ENCODE measurements at regions of chr11 and their contacts with region 1.

Region 1: DNA sequence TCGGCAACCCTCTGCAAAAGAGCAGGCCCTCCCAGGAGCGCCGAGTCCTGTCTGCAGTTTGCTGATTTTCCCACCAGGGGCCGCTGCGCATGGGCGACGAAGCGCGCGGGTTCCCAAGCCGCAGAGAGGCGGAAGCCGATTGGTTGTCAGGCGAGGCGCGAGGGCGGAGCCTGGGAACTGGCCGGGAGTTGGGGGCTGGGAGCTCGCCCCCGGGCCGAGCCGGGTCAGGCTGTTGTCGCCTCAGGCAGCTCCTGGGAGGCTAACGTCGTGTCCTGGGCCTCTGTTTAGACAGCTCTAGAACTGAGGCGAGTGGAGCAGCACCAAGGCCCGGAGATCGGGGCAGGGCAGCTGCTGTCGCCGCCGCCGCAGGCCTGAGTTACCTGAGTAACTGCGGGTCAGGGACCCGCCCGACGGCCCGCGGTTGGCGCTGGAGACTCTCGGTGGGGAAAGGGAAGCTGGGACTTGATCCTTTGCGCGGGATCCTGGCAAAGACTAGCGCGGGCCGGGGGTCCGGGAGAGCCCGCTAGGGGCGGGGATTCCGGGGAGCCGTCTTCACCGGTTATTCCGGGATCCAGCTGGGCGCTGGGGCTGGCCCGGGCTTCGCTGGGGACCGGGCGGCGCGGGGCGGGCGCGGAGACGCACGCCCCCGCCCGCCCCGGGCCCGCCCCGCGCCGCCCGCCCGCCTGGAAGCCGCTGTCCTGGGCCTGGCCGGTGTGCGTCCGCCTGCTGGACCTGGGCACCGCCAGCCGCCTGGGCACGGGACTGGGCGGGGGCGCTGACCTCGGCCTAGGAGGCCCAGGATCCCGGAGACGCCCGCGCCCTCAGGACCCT is at the start of gene STIM1:
- DNase-seq: peak; percentile 75 to 100
- H3K4me3 ChIP-seq: peak within 1 kb of the TSS; percentile 47 to 84 (median 72)
- H3K27ac ChIP-seq: no peak within 1 kb of the TSS
- H3K4me1 ChIP-seq: peaks cover 10 to 17% (median 11%) of the 10 kb centered on the region in 4 experiments
- H3K27me3 ChIP-seq: peaks cover 0 to 13% (median 8%) of the 10 kb centered on the region in 4 experiments; a peak in 5 of 7 replicates
- CTCF ChIP-seq: peak; percentile 84 to 90 (median 90)
- EP300 ChIP-seq: peak in 1 of 2 experiments; percentile 67; a peak in 1 of 3 replicates
- POLR2A ChIP-seq: peak in 1 of 2 experiments; percentile 52; a peak in 1 of 3 replicates
- RAD21 ChIP-seq: peak; percentile 74 to 85
- total RNA-seq, gene STIM1: 11.6 and 12.2 TPM in 2 replicates

Region 2: GRCh38 chr11:3807909-3808860 is 47.0 kb before region 1 on chr11 and contains the start of gene PGAP2:
- CTCF ChIA-PET with region 1: interaction called, 14 read pairs
- POLR2A ChIA-PET with region 1: no interaction called
- DNase-seq: peak; percentile 54 to 90
- H3K4me3 ChIP-seq: peak within 1 kb of the TSS; percentile 66 to 84 (median 74)
- H3K27ac ChIP-seq: peak within 1 kb of the TSS; percentile 46; the same call in 1 of the 2 replicates
- H3K4me1 ChIP-seq: peaks cover 0 to 8% (median 5%) of the 10 kb centered on the region in 4 experiments; a peak in 5 of 7 replicates
- H3K27me3 ChIP-seq: no peaks in the 10 kb centered on the region
- CTCF ChIP-seq: peak; percentile 75 to 89 (median 86)
- EP300 ChIP-seq: no peak
- POLR2A ChIP-seq: peak in 1 of 2 experiments; percentile 61; a peak in 2 of 3 replicates
- RAD21 ChIP-seq: peak; percentile 73 to 76
- total RNA-seq, gene PGAP2: 56.0 and 56.5 TPM in 2 replicates

Region 3: DNA sequence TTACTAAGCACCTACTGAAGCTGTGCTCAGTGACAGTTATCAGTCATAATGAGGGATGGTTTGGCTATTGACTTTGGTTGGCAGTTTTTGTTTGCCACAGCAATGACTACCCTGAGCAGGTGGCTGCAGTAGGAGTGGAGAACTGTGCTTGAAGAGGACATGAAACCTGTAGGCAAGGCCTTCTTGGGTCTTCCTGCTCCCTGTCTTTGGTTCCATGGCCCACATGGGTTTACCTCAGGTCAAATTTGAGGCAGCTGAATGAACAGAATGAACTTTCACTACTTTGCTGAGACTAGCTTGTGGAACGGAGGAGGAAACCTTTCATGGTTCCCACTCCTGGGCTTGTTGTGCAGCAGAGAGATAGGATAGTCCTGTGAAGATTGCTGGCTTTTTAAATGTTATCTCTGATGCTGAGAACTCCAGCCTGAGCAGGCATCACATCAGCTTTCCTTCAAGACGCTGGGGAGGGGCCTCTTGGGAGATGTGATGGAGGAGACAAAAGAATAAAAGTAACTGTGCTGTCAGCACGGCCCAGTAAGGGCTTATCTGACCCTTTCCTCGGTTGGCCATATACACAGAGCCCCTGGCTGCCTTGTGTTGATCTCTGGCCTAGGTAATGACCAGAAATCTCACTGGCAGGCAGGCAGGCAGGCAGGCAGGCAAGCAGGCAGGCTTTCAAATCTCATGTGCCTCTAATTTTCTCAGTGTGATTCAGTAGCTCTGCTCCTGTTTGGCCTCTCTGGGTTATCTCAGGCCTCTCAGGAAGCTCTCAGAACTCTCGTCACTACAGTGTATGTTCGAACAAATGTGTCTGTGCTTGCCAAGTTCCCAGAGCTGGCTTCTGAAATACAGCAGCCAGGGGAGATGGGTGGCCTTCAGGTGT is 12.3 kb after region 1 on chr11:
- CTCF ChIA-PET with region 1: interaction called, 73 read pairs
- POLR2A ChIA-PET with region 1: interaction called, 6 read pairs
- DNase-seq: no peak
- H3K4me3 ChIP-seq: no peak overlapping the region
- H3K27ac ChIP-seq: no peak overlapping the region
- H3K4me1 ChIP-seq: peaks cover 0 to 1% (median under 1%) of the 10 kb centered on the region in 4 experiments; a peak in 2 of 7 replicates
- H3K27me3 ChIP-seq: no peaks in the 10 kb centered on the region
- CTCF ChIP-seq: no peak
- EP300 ChIP-seq: no peak
- POLR2A ChIP-seq: no peak
- RAD21 ChIP-seq: no peak

Region 4: DNA sequence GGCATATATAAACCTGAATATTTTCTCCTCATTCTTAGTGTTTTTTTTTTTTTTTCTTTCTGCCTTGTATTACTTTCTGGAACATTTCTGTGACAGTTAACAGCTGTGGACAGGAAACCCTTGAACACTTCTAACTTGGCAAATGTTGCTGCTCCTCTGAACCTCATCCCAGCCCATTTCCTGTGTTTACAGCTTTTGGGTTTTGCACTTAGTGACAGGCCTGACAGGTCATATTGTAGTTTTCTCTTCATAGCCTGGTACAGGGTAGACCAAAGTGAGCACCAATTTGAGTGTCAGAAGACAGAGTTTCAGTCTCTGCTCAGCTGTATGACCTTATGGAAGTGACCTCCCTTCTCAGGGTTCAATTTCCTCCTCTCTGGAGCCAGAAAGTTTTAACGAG is 91.9 kb after region 1 on chr11:
- CTCF ChIA-PET with region 1: interaction called, 14 read pairs
- POLR2A ChIA-PET with region 1: no interaction called
- DNase-seq: no peak
- H3K4me3 ChIP-seq: no peak overlapping the region
- H3K27ac ChIP-seq: no peak overlapping the region
- H3K4me1 ChIP-seq: peaks cover 0 to 3% (median 2%) of the 10 kb centered on the region in 4 experiments; a peak in 4 of 7 replicates
- H3K27me3 ChIP-seq: no peaks in the 10 kb centered on the region; a peak in 1 of 7 replicates
- CTCF ChIP-seq: no peak
- EP300 ChIP-seq: no peak
- POLR2A ChIP-seq: no peak
- RAD21 ChIP-seq: no peak

Region 5: GRCh38 chr11:3971756-3972404 is 116.7 kb after region 1 on chr11:
- CTCF ChIA-PET with region 1: interaction called, 16 read pairs
- POLR2A ChIA-PET with region 1: no interaction called
- DNase-seq: no peak
- H3K4me3 ChIP-seq: no peak overlapping the region
- H3K27ac ChIP-seq: no peak overlapping the region
- H3K4me1 ChIP-seq: no peaks in the 10 kb centered on the region
- H3K27me3 ChIP-seq: no peaks in the 10 kb centered on the region
- CTCF ChIP-seq: no peak
- EP300 ChIP-seq: no peak
- POLR2A ChIP-seq: no peak
- RAD21 ChIP-seq: no peak

Region 6: DNA sequence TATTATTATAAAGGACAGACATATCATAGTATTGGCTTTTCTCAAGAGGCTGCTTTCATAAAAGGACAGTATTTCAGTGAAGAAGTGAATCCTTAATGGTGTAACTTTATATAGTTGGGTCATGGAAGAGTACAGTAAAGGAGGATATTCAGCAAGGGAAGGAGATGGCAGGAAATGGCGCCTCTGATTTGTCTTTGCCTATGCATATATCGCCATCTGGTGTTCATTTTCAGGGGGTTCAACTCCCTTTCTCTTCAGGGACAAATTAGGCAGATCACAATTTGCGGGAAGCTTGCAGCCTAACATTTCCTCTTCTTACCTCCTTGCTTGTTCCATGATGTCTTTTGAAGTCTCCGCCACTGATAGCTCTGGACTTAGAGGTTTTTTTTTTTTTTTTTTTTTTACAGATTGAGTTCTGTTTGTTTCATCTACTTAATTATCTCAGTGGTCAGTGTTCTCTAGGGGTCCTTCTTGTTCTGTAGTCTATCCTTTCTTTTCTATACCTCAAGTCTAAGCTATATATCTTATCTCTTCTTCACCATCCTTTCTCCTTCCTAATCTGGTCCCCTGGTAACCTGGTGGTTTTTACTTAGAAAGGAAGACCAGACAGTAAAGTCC is 217.6 kb after region 1 on chr11:
- CTCF ChIA-PET with region 1: interaction called, 422 read pairs
- POLR2A ChIA-PET with region 1: interaction called, 3 read pairs
- DNase-seq: no peak
- H3K4me3 ChIP-seq: no peak overlapping the region
- H3K27ac ChIP-seq: no peak overlapping the region
- H3K4me1 ChIP-seq: no peaks in the 10 kb centered on the region
- H3K27me3 ChIP-seq: no peaks in the 10 kb centered on the region; a peak in 1 of 7 replicates
- CTCF ChIP-seq: peak in 2 of 3 experiments; percentile 89; a peak in 3 of 4 replicates
- EP300 ChIP-seq: no peak
- POLR2A ChIP-seq: no peak
- RAD21 ChIP-seq: peak; percentile 98